ENCODE measurements at regions of chr7 and their contacts with region 1.

Region 1: GRCh38 chr7:101287032-101287431 is 34.6 kb downstream of the IFT22 start:
- DNase-seq: no peak
- ATAC-seq: no peak
- H3K4me3 Mint-ChIP-seq: no peak overlapping the region
- H3K27ac Mint-ChIP-seq: no peak overlapping the region
- H3K4me1 Mint-ChIP-seq: peaks cover 20% of the 10 kb centered on the region
- H3K27me3 Mint-ChIP-seq: peaks cover 10% of the 10 kb centered on the region
- CTCF ChIP-seq: no peak

Region 2: GRCh38 chr7:101244375-101245146 is 42.5 kb before region 1 on chr7 and contains the start of gene FIS1:
- CTCF ChIA-PET with region 1: interaction called, 11 read pairs
- POLR2A ChIA-PET with region 1: no interaction called
- intact Hi-C with region 1: loop called (anchors 2 kb)
- DNase-seq: peak; percentile 96
- ATAC-seq: peak; percentile 94
- H3K4me3 Mint-ChIP-seq: peak within 1 kb of the TSS; percentile 95
- H3K27ac Mint-ChIP-seq: peak within 1 kb of the TSS; percentile 95
- H3K4me1 Mint-ChIP-seq: peaks cover 42% of the 10 kb centered on the region
- H3K27me3 Mint-ChIP-seq: no peaks in the 10 kb centered on the region
- CTCF ChIP-seq: no peak
- total RNA-seq, gene FIS1: 113 and 117 TPM in 2 replicates

Region 3: DNA sequence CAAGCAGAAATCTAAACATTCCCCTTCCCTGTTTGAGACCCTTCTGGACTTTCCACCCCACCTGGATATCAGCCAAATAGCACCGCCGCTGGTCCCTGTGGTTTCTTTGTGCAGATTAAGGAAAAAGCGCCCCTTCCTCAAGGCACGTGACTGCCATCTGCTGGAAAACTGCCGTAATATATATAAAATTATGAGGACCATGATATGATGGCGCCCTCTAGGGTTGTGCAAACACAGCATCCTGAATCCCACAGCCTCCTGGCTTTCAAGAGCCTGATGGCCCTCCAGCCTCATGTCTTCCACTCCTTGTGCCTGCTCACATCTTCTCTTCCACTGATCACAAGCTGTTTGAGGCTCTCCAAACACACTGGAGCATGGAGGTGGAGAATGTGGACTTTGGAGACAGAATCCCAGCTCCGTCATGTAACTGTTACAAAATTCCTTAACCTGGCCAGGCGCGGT is 220.8 kb after region 1 on chr7:
- CTCF ChIA-PET with region 1: interaction called, 3 read pairs
- POLR2A ChIA-PET with region 1: no interaction called
- intact Hi-C with region 1: loop called (anchors 2 kb)
- DNase-seq: no peak
- ATAC-seq: peak; percentile 71
- H3K4me3 Mint-ChIP-seq: peak overlapping the region; percentile 37
- H3K27ac Mint-ChIP-seq: no peak overlapping the region
- H3K4me1 Mint-ChIP-seq: peaks cover 41% of the 10 kb centered on the region
- H3K27me3 Mint-ChIP-seq: peaks cover 8% of the 10 kb centered on the region
- CTCF ChIP-seq: peak; percentile 32